ENCODE measurements at regions of chr11 and their contacts with region 1.

Region 1: DNA sequence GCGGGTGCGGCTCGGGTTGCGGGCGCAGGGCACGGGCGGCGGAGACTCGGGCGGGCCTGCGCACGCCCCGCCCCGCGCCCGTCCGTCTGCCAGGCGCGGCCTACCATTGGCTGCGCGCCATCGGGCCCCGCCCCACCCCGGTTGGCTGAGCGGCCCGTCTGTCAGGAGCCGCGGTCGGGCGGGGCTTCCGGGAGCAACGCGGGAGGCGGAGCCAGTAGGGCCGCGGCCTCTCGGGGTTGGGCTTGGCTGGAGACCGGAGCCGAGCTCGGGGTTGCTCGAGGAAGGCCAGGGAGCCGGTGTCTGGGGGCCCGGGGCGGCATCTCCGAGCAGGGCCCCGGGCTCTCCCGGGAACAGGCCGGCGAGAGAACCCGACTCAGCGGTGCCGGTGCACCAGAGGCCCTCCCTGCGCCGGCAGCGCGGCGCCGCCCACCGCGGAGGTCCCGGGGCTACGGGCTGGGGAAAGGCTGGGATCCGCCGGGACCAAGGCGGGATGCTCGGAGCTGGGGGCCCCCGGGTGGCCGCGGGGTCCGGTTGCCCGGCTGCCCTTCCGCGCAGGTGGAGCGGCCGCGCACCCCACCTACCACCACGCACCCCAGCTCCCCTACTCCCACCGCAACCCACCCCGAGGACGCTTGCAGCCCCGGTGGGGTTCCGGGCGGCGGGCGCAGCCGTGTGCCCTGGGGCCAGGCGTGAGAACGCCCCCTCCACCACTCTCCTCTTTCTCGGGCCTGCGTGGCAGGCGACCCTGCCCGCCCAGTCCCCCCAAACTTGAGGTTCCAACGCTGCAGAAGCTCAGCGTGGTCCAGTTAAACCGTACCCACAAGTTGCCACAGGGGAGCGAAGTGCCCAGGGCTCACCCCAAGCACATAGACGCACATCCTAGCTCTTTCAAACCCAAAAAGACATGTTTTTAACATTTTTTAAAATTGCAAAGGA is at the start of gene HRAS:
- DNase-seq: peak; percentile 92
- H3K4me3 Mint-ChIP-seq: peak within 1 kb of the TSS; percentile 76
- H3K27ac Mint-ChIP-seq: peak within 1 kb of the TSS; percentile 61
- H3K4me1 Mint-ChIP-seq: no peaks in the 10 kb centered on the region
- H3K27me3 Mint-ChIP-seq: no peaks in the 10 kb centered on the region
- CTCF ChIP-seq: no peak
- total RNA-seq, gene HRAS: 115 and 123 TPM in 2 replicates

Region 2: GRCh38 chr11:506238-506994 is 29.4 kb before region 1 on chr11:
- CTCF ChIA-PET with region 1: no interaction called
- POLR2A ChIA-PET with region 1: interaction called, 35 read pairs
- intact Hi-C with region 1: no loop called
- DNase-seq: peak; percentile 95
- H3K4me3 Mint-ChIP-seq: peak overlapping the region; percentile 95
- H3K27ac Mint-ChIP-seq: peak overlapping the region; percentile 99
- H3K4me1 Mint-ChIP-seq: peaks cover 6% of the 10 kb centered on the region
- H3K27me3 Mint-ChIP-seq: no peaks in the 10 kb centered on the region
- CTCF ChIP-seq: no peak

Region 3: DNA sequence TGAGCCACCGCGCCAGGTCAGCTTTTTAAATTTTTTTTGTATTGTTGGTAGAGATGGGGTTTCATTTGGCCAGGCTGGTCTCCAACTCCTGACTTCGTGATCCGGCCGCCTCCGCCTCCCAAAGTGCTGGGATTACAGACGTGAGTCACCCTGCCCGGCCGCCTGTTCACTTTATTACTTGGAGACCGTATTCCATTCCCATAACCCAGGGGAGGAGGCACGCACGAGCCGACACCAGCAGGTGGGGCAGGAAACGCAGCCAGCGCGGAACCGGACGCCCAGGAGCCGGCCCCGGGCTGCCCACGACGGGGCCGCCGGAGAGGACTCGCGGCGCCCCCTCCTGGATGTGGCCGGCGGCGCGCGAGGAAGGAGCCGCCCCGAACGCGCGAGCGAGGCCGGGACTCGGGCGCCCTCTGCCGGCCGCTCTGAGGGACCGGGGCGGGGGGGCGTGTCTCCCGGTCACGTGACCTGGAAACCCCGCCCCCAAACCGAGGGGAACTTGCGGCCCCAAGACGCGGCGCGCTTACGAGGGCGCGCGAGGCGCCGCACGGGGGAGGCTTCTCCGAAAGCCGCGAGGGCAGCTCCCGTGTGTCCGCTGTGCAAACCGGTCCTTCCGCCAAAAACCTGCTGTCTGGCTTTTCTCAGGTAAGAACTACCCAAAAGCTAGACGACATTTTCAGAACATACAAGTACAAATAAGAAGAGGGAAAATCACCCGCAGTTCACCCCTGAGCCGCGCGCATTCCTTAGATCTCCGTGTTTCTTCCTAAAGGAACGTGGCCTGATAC is 17.1 kb before region 1 on chr11:
- CTCF ChIA-PET with region 1: interaction called, 23 read pairs
- POLR2A ChIA-PET with region 1: interaction called, 12 read pairs
- intact Hi-C with region 1: no loop called
- DNase-seq: peak; percentile 98
- H3K4me3 Mint-ChIP-seq: peak overlapping the region; percentile 60
- H3K27ac Mint-ChIP-seq: peak overlapping the region; percentile 85
- H3K4me1 Mint-ChIP-seq: peaks cover 10% of the 10 kb centered on the region
- H3K27me3 Mint-ChIP-seq: no peaks in the 10 kb centered on the region
- CTCF ChIP-seq: peak; percentile 98

Region 4: DNA sequence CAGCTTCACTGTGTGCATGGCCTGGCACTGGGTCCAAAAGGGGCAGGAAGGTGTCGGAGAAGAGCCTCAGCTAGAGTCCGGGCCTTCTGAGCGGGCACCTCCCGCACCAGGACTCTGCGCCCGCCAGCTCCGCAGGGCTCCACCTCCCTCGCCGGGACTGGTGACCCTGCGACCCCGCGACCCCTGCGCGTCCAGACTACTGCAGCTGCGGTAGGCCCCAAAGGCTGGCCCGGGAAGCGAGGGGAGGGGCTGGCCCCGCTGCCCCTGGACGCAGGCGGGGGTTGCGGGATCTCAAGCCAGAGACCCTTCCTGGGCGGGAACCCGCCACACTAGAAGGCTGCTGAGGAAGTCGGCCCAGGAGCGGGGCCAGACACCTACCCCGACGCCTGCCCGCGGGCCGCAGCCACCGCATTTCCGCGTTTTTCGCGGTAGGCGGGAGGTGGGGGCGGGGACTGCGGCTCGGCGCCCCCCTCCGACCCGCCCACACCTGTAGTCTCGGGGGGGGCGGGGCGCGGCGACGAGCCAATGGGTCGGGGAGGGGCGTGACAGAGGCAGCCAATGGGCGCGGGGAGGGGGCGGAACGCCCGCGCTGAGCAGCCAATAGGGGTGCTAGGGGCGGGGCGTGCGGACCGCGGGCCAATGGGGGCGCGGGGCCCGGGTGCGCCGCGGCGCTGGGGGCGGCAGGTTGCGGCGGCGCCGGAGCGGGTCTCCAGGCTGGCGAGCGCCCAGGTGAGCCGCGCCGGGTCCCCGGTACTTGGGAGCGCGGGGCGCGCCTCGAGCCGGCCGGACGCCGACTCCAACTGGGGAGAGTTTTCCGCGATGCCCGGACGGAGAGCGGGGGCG is 24.7 kb after region 1 on chr11 and contains the starts of genes LMNTD2 and RASSF7:
- CTCF ChIA-PET with region 1: no interaction called
- POLR2A ChIA-PET with region 1: interaction called, 14 read pairs
- intact Hi-C with region 1: no loop called
- DNase-seq: peak; percentile 87
- H3K4me3 Mint-ChIP-seq: peak within 1 kb of the TSS; percentile 85
- H3K27ac Mint-ChIP-seq: peak within 1 kb of the TSS; percentile 23
- H3K4me1 Mint-ChIP-seq: peaks cover 14% of the 10 kb centered on the region
- H3K27me3 Mint-ChIP-seq: no peaks in the 10 kb centered on the region
- CTCF ChIP-seq: no peak
- total RNA-seq, gene LMNTD2: 6.1 and 8.0 TPM in 2 replicates
- total RNA-seq, gene RASSF7: 11.4 and 13.3 TPM in 2 replicates

Region 5: DNA sequence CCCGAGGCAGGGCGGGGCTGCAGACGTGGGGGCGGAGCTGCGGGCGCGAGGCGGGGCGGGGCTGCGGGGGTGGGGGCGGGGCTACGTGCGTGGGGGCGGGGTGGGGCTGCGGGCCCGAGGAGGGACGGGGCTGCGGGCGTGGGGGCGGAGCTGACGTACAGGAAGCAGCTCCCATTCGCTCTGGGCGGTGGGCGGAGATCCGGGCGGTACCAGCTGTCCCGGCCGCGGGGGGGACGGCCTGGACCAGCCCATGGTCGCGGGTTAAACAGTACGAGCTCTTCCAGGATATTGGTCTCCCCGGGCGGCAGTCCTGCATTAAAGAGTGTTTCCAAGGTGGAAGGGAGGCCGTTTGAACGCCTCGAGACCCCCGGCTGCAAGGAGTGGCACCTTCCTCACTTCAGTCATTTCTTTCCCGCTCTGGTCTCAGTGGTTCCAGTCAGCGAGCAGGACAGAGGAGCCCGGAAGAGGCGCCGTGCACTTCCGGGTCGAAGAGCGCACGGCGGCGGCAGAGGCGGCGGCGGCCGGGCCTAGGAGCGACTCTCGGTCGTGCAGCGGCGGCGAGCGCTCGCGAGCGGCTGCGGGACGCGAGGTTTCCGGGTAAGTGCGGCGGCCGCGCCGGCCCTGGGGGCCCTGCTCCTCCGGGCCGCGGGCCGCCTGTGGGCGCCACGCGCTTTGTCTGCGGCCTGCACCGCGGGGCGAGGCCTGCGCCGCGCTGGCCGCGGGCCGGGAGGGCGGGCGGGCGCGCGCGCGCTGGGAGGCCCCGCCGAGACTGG is 40.4 kb after region 1 on chr11 and contains the start of gene PHRF1:
- CTCF ChIA-PET with region 1: no interaction called
- POLR2A ChIA-PET with region 1: interaction called, 17 read pairs
- intact Hi-C with region 1: no loop called
- DNase-seq: peak; percentile 91
- H3K4me3 Mint-ChIP-seq: peak within 1 kb of the TSS; percentile 79
- H3K27ac Mint-ChIP-seq: peak within 1 kb of the TSS; percentile 93
- H3K4me1 Mint-ChIP-seq: peaks cover 32% of the 10 kb centered on the region
- H3K27me3 Mint-ChIP-seq: no peaks in the 10 kb centered on the region
- CTCF ChIP-seq: no peak
- total RNA-seq, gene PHRF1: 29.9 and 31.8 TPM in 2 replicates